Activated T-helper 2 cell treated with anti-CD3 and anti-CD28 coated beads, Interferon-gamma antibody, Interleukin-2, Interleukin-4, amounts not matched to agents 10 μg/mL and 5 μg/mL and 100 μg/mL, durations not matched to agents 14 hours and 24 hours and 36 hours (primary cell): ENCODE measurements at regions of chr1 and their contacts with region 1.

Region 1: DNA sequence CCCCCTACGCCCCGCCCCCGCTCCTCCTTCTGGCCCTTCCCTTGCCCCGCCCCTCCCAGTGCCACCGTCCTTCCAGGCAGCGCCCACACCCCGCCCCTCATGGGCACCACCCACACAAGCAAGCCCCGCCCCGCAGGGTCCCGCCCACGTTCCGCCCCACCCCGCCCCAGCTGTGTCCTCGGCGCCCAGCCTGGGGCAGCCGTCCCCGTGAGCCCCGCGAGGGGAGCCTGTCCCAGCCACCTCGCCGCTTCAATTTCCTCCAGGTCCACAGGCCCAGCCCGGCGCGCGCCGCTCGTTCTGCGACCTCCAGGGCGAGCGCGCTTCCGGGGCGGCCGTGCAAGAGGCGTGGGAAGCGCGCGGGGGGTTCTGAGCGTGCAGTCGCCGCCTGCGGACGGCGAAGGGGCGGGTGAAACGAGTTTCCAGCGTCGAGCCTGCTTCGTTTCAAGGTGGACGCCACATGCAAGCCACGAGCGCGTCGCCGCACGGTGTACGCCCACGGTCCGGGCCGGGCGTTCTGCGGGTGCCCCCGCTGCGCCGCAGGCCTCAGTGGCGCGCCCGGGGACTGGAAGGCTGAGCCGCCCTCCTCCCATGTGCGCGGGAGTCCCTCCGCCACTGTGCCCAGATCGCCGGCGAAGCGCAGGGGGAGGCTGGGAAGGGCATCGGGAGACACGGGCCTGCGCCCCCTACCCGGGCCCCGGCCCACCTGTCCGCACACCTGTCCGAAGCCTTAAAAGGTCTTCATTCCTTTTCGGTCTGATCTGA is 10.8 kb upstream of the FAAP20 start:
- DNase-seq: peak; percentile 86
- H3K4me3 Mint-ChIP-seq: peak overlapping the region; percentile 45
- H3K27ac Mint-ChIP-seq: no peak overlapping the region
- H3K4me1 Mint-ChIP-seq: no peaks in the 10 kb centered on the region
- H3K27me3 Mint-ChIP-seq: no peaks in the 10 kb centered on the region

Region 2: DNA sequence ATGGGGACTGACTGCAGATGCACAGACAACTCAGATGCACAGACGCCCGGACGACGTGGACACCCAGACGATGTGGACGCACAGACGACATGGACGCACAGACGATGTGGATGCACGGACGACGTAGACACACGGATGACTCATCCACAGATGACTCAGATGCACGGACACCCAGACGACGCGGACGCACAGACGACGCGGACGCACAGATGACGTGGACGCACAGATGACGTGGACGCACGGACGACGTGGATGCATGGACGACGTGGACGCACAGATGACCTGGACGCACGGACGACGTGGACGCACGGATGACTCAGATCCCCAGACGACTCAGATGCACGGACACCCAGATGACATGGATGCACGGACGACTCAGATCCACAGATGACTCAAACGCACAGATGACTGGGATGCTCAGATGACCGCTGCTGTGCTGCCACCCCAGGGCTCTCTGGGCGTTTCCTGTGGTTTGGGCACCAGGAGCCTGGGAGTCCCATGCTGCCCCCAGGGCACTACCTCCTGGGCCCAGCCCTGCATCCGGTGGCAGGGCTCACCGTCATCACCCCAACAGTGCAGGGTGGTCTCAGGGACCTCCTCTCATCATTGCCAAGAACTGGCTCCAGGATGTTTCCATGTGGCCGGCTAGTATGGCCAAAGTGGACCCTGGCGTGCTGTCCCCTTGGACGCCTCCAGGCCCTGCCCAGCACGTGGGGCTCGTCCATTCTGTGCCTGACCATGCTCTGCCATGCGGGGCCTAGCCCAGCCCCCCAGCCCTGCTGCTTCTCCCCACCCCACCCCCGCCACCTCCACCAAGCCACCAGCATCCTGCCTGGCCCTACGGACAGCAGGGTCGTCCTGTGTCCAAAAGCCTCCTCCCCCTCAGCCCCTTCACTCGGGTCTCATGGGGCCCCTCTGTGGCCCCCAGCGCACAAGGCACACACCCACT is 24.8 kb before region 1 on chr1:
- intact Hi-C with region 1: no loop called
- DNase-seq: no peak
- H3K4me3 Mint-ChIP-seq: no peak overlapping the region
- H3K27ac Mint-ChIP-seq: no peak overlapping the region
- H3K4me1 Mint-ChIP-seq: no peaks in the 10 kb centered on the region
- H3K27me3 Mint-ChIP-seq: no peaks in the 10 kb centered on the region

Region 3: DNA sequence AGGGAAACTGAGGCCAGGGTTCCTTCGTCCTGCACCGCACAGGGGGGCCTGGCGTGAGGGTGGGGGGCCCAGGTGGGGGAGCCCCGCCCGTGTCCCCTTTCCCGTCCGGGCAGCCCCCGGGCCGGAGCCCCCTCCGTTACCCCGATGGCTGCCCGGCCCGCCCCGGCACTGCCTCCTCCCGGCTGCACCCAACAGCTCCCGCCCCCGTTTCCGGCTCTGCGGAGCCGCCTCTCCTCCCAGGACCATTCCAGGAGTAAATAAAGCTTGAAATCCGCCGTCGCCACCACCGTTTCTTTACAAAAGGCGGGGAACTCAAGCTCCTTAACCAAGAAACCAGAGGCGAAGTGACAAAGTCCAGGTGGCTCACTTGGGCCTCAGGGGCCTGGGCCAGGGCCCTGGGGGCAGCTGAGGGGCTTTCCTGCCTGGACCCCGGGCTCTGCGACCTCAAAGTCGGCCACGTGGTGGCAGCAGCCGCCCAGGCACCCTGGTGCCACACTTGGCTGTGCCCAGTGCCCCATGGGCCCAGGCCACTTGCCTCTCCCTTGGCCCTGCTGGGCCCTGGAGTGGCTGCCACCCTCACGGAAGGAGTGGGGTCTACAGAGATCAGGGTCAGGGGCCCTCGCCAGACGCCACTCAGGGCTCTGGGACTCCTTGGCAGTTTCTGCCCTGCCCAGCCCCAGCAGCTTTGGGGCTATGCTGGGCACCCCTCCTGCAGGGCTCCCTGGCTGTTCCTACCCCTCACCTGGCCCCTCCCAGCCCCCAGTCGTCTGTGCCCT is 10.3 kb before region 1 on chr1:
- intact Hi-C with region 1: no loop called
- DNase-seq: peak; percentile 91
- H3K4me3 Mint-ChIP-seq: peak overlapping the region; percentile 84
- H3K27ac Mint-ChIP-seq: peak overlapping the region; percentile 92
- H3K4me1 Mint-ChIP-seq: peaks cover 16% of the 10 kb centered on the region
- H3K27me3 Mint-ChIP-seq: no peaks in the 10 kb centered on the region

Region 4: GRCh38 chr1:2227346-2228153 is 22.2 kb after region 1 on chr1:
- intact Hi-C with region 1: loop called (anchors 1 kb)
- DNase-seq: peak; percentile 96
- H3K4me3 Mint-ChIP-seq: peak overlapping the region; percentile 58
- H3K27ac Mint-ChIP-seq: no peak overlapping the region
- H3K4me1 Mint-ChIP-seq: peaks cover 17% of the 10 kb centered on the region
- H3K27me3 Mint-ChIP-seq: peaks cover 2% of the 10 kb centered on the region

Region 5: DNA sequence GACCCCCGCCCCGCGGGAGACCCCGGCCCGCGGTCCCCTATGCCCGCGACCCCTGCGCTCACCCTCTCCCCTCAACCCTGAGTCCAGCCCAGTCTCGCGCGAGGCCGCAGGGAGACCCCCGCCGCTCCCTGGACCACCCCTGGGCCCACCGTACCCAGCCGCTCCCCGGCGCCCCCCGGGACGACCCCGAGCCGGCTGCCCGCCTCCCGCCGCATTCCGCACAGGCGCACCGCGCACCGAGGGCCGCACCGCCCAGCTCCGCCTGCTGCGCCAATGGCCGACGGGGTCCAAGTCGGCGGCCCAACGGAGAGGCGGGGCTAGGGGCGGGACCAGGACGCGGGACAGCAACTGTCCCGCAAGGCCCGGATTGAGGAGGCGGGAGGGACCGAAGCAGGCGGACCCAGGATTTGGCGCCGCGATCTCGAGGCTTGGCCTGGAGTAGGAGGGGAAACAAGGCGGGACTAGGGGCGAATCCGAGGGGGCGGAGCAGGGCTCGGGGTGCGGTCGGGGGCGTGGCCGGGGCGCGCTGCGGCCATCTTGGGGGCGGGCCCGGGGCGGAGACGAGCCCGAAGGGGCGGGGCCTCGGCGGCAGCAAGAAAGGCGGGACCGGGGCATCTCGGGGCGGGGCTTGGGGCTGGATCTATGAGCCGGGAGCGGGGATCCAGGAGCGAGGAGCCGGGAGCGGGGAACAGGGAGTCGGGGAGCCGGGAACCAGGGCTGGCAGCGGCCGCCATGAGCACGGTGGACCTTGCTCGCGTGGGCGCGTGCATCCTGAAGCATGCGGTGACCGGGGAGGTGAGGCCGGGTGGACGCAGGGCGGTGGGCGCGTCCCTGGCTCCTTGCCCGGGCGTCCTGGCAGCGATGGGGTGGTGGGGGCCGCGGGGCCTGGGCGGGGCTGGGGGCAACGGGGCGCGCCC is 381.0 kb after region 1 on chr1 and contains the start of gene PRXL2B:
- intact Hi-C with region 1: loop called (anchors 1 kb)
- DNase-seq: peak; percentile 98
- H3K4me3 Mint-ChIP-seq: peak within 1 kb of the TSS; percentile 84
- H3K27ac Mint-ChIP-seq: peak within 1 kb of the TSS; percentile 86
- H3K4me1 Mint-ChIP-seq: peaks cover 33% of the 10 kb centered on the region
- H3K27me3 Mint-ChIP-seq: no peaks in the 10 kb centered on the region
- total RNA-seq, gene PRXL2B: 26.5 and 28.4 TPM in 2 replicates